CD4-positive, alpha-beta memory T cell (primary cell): ENCODE measurements at regions of chr10 and their contacts with region 1.

Region 1: GRCh38 chr10:7525314-7526016 is 114.6 kb upstream of the SFMBT2 start:
- DNase-seq: peak; percentile 56 to 69 (median 57)
- H3K4me3 ChIP-seq: no peak overlapping the region
- H3K4me3 Mint-ChIP-seq: no peak overlapping the region
- H3K27ac ChIP-seq: no peak overlapping the region
- H3K27ac Mint-ChIP-seq: no peak overlapping the region
- H3K4me1 ChIP-seq: no peaks in the 10 kb centered on the region
- H3K4me1 Mint-ChIP-seq: peaks cover 0 to 11% (median 6%) of the 10 kb centered on the region in 4 donors
- H3K27me3 ChIP-seq: no peaks in the 10 kb centered on the region
- H3K27me3 Mint-ChIP-seq: peaks cover 0 to 2% of the 10 kb centered on the region in 2 donors

Region 2: DNA sequence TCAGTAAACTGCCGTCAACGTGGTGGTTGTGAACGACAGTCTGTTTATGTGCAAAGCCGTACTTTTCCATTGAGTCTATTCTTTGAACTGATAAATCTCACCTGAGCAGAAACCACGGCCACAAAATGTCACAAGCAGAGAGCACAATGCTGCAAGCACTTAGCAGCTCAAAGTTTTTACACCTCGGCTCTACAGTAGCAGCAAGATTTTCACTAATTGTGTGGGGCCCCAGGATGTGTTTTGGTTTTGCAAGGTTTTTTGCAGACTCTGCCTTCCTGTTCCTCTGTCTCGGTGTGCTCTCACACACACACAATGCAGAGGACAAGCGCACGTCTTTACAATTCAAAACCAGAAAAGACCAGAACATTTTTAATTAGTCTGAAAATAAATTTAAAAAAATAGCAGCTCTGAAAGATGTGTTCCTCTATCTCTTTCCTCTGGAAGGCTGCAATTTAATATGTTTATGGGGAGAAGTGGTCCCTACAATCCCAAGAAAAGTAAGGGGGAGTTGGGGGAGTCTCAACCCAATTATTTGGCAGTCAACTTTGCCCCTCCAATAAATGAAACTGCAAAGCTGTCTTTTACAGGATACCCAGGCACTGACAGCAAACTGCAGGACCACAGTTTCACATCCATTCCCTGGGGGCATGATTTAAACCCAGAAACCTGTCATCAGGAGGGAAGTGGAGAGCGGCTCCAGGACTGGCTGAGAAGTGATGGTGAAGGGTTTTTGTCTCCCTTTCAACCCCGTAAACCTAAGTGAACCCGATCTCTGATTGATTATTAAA is 40.8 kb before region 1 on chr10:
- CTCF ChIA-PET with region 1: interaction called, 4 read pairs
- POLR2A ChIA-PET with region 1: interaction called, 4 read pairs
- intact Hi-C with region 1: loop called (anchors 2 kb)
- DNase-seq: peak; percentile 68 to 79 (median 74)
- H3K4me3 ChIP-seq: peak overlapping the region; percentile 25 to 33
- H3K4me3 Mint-ChIP-seq: peak overlapping the region; percentile 57 to 83 (median 75)
- H3K27ac ChIP-seq: peak overlapping the region; percentile 45
- H3K27ac Mint-ChIP-seq: peak overlapping the region; percentile 73 to 92 (median 86)
- H3K4me1 ChIP-seq: peaks cover 63% of the 10 kb centered on the region
- H3K4me1 Mint-ChIP-seq: peaks cover 51 to 85% (median 66%) of the 10 kb centered on the region in 4 donors
- H3K27me3 ChIP-seq: no peaks in the 10 kb centered on the region
- H3K27me3 Mint-ChIP-seq: no peaks in the 10 kb centered on the region

Region 3: DNA sequence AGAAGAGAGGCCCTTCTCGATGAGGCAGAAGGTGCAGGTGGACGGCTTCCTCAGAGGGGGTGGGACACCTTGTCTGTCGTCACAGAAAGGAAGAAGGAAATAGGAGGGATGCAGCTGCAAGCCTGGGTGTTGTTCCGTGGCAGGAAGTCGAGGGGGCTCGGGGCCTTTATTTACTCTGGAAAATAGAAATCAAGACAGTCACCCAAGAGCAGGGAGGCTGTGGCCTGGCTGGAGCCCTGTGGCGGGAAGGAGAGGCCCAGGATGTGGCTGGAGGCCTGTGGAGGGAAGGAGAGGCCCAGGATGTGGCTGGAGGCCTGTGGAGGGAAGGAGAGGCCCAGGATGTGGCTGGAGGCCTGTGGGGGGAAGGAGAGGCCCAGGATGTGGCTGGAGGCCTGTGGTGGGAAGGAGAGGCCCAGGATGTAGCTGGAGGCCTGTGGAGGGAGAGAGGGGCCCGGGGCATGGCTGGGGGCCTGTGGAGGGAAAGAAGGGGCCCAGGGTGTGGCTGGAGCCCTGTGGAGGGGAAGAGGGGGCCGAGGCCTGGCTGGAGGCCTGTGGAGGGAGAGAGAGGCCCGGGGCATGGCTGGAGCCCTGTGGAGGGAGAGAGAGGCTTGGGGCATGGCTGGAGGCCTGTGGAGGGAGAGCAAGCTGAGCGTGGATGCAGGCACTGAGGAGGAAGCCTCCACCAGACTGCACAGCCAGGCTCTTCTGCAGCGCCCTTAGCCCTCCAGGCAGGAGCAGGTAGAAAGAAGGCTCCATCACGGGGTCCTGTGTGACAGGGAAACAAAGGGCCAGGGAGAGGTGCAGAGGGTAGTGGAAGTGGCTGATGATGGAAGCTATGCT is 17.4 kb before region 1 on chr10:
- CTCF ChIA-PET with region 1: interaction called, 15 read pairs
- POLR2A ChIA-PET with region 1: interaction called, 3 read pairs
- intact Hi-C with region 1: no loop called
- DNase-seq: peak in 4 of 5 donors; percentile 27 to 43 (median 31)
- H3K4me3 ChIP-seq: no peak overlapping the region
- H3K4me3 Mint-ChIP-seq: peak overlapping the region; percentile 24 to 86 (median 67)
- H3K27ac ChIP-seq: peak overlapping the region; percentile 1
- H3K27ac Mint-ChIP-seq: peak overlapping the region; percentile 81 to 98 (median 94)
- H3K4me1 ChIP-seq: peaks cover 34% of the 10 kb centered on the region
- H3K4me1 Mint-ChIP-seq: peaks cover 36 to 72% (median 44%) of the 10 kb centered on the region in 4 donors
- H3K27me3 ChIP-seq: no peaks in the 10 kb centered on the region
- H3K27me3 Mint-ChIP-seq: no peaks in the 10 kb centered on the region

Region 4: DNA sequence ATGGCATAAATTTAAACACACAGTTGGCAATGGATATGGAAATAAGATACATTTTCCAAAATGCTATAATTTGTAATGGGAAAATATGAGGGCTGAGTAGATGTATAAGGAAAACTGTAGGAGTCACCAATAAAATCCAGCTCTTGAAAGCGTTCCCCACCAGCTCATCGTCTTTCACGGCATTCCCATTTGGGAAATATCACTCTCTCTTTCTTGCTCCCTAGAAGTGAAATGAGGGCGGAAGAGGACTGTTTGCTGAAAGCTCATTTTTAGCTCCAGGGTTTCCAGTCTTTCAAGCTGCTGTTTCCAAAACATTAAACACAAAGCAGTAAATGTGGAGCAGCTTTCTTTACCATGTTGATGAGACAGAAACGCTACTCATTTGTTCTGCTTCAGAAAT is 10.0 kb before region 1 on chr10:
- CTCF ChIA-PET with region 1: interaction called, 17 read pairs
- POLR2A ChIA-PET with region 1: interaction called, 6 read pairs
- intact Hi-C with region 1: no loop called
- DNase-seq: no peak
- H3K4me3 ChIP-seq: no peak overlapping the region
- H3K4me3 Mint-ChIP-seq: no peak overlapping the region
- H3K27ac ChIP-seq: no peak overlapping the region
- H3K27ac Mint-ChIP-seq: no peak overlapping the region
- H3K4me1 ChIP-seq: peaks cover 18% of the 10 kb centered on the region
- H3K4me1 Mint-ChIP-seq: peaks cover 15 to 37% (median 22%) of the 10 kb centered on the region in 4 donors
- H3K27me3 ChIP-seq: no peaks in the 10 kb centered on the region
- H3K27me3 Mint-ChIP-seq: no peaks in the 10 kb centered on the region

Region 5: GRCh38 chr10:7687228-7687907 is 161.9 kb after region 1 on chr10:
- CTCF ChIA-PET with region 1: interaction called, 113 read pairs
- POLR2A ChIA-PET with region 1: no interaction called
- intact Hi-C with region 1: no loop called
- DNase-seq: peak; percentile 66 to 76 (median 69)
- H3K4me3 ChIP-seq: no peak overlapping the region
- H3K4me3 Mint-ChIP-seq: peak overlapping the region in 2 of 8 donors; percentile 36 to 64
- H3K27ac ChIP-seq: no peak overlapping the region
- H3K27ac Mint-ChIP-seq: peak overlapping the region in 1 of 7 donors; percentile 66
- H3K4me1 ChIP-seq: no peaks in the 10 kb centered on the region
- H3K4me1 Mint-ChIP-seq: peaks cover 3 to 5% (median 3%) of the 10 kb centered on the region in 4 donors
- H3K27me3 ChIP-seq: no peaks in the 10 kb centered on the region
- H3K27me3 Mint-ChIP-seq: peaks cover 2 to 13% of the 10 kb centered on the region in 2 donors

Region 6: GRCh38 chr10:9302120-9302746 is 1776.8 kb after region 1 on chr10:
- CTCF ChIA-PET with region 1: interaction called, 30 read pairs
- POLR2A ChIA-PET with region 1: no interaction called
- intact Hi-C with region 1: loop called (anchors 1 kb)
- DNase-seq: peak in 4 of 5 donors; percentile 45 to 48 (median 48)
- H3K4me3 ChIP-seq: no peak overlapping the region
- H3K4me3 Mint-ChIP-seq: no peak overlapping the region
- H3K27ac ChIP-seq: no peak overlapping the region
- H3K27ac Mint-ChIP-seq: no peak overlapping the region
- H3K4me1 ChIP-seq: no peaks in the 10 kb centered on the region
- H3K4me1 Mint-ChIP-seq: no peaks in the 10 kb centered on the region
- H3K27me3 ChIP-seq: no peaks in the 10 kb centered on the region
- H3K27me3 Mint-ChIP-seq: peaks cover 9 to 13% of the 10 kb centered on the region in 2 donors